GM10248 (cell line): ENCODE measurements at regions of chr6 and their contacts with region 1.

Region 1: DNA sequence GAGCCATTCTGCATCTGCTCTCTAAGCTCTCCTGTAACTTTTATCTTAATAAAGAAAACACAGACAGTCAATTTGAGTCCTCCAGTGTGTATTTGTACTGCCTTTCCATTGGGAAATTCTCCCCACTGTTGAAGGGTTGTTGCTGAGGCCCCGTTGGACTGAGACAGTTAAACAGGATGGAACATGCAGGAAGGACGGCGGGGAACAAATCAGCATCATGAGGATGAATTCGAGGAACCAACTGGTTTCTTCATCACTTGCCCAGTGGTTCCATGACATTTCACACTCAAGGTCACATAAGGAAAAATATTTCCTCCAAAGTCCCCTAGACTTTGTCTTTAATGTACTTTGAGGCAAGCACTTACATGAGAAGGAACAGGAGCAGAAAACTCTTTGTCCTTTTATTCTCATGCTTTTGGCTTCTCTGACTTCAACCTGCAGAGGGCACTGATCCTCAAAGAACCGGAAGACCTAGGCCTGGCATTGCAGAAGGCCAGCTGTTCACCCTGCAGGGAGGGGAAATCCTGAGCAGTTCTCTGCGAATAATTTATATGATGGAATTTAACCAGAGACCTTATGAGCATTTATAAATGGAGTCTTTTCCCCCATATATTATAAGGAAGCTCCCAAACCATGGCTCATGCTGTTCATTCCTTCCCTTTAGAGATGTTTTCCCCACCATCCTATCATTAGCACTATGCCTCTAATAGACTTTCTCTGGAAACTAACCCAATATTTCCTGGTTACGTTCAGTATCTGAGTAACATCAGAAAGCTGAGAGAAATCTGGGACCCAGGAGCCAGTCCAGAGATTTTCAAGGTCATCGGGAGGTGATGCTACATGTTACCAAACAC is 55.2 kb upstream of the ADGRF1 start:
- DNase-seq: peak; percentile 65
- CTCF ChIP-seq: peak; percentile 73

Region 2: DNA sequence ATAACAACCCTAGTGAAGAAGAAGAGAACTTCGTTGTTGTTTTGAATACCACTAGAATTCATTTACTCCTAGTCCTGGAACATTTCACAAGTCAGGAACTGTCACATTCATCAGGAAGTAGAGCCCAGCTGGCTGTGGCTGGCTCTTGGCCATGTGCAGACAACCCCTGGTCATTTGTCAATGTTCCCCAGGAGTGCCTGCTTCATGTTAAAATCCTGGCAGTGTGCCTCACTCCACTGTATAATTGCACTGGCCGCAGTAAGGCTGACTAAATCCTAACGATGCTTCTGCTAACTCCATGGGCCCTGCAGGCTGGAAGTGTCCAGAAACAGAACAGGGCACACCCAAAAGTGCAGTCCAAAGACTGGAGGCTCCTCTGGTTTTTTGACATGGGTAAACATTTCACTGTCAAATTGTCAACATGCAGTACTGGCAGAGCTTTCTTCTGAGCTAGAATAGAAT is 13.7 kb before region 1 on chr6:
- CTCF ChIA-PET with region 1: interaction called, 18 read pairs
- POLR2A ChIA-PET with region 1: no interaction called
- DNase-seq: no peak
- CTCF ChIP-seq: no peak

Region 3: DNA sequence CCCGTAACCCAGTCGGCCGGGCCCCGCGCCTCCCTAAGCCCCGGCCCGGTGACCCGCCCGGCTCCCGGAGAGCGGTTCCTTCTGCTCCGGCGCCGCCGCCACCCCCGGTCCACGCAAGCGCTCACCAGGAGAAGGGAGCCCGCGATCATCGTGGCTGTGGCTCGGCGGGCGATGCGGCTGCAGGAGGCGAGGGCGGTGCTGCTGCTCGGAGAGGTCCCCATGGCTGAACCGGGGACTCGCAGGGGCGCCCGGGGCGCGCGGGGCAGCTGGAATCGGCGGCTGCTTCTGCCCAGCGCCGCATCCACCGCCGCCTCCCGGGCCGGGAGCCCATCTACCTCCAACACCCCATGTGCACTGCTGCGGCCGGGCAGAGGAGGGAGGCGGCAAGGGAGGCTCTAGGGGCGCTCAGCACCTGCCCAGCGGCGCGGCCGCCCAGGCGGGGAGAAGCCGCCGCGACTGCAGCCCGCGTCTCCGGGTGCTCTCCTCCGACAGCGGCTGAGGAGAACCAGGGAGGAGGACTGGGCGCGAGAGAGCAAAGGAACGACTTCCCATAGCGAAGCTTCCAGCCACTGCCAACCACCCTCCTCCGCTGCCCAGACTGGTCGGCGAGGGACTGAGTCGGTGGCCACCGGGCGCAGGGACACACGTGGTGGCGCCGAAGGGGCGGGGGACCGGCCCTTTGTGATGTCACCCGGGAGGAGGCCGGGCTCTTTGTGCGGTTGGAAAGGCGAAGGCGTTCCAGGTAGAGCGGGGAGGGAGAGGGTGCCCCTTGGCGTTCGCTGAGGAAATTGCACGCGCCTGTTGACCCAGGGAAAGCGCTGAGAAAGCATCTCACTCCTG is 212.2 kb after region 1 on chr6 and contains the start of gene TNFRSF21:
- CTCF ChIA-PET with region 1: interaction called, 84 read pairs
- POLR2A ChIA-PET with region 1: no interaction called
- DNase-seq: peak; percentile 91
- CTCF ChIP-seq: peak; percentile 91